ENCODE measurements at regions of chr1 and their contacts with region 1.

Region 1: GRCh38 chr1:151513626-151514427 is 2.6 kb downstream of the CGN start:
- DNase-seq: no peak
- H3K4me3 ChIP-seq: no peak overlapping the region
- CTCF ChIP-seq: no peak

Region 2: DNA sequence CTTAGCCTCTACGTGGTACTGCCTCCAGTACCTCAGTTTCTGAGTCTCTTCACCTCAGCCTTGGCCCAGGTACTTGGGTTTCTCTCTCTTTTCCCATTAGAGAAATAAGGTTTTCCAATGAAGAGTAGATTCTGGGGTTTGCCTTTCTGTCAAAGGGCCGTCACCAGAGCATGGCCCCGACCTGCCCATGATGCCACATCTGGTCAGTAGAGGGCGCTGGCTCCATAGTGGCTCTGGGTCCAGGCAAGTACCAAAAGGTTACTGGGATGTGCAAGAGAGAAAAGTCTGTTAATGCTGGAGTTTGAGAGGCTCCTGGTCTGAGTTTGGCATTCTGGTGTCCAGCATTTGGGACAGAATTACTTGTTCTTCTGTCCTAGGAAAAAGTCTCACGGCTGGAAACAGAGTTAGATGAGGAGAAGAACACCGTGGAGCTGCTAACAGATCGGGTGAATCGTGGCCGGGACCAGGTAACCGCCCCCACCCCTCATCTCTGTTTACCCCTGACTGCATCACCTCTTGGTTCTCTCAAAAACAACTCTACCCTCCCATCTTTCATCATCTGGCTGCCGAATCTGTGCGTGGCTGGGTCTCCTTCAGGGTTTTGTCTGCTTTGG is 20.9 kb after region 1 on chr1:
- CTCF ChIA-PET with region 1: interaction called, 112 read pairs
- POLR2A ChIA-PET with region 1: no interaction called
- DNase-seq: no peak
- H3K4me3 ChIP-seq: no peak overlapping the region
- CTCF ChIP-seq: peak; percentile 94